ENCODE measurements at regions of chr1 and their contacts with region 1.

Region 1: GRCh38 chr1:235415008-235415904 is 48.0 kb downstream of the TBCE start:
- DNase-seq: peak; percentile 90
- H3K4me3 ChIP-seq: no peak overlapping the region
- H3K27ac ChIP-seq: no peak overlapping the region
- H3K4me1 ChIP-seq: peaks cover 6% of the 10 kb centered on the region
- H3K27me3 ChIP-seq: no peaks in the 10 kb centered on the region

Region 2: DNA sequence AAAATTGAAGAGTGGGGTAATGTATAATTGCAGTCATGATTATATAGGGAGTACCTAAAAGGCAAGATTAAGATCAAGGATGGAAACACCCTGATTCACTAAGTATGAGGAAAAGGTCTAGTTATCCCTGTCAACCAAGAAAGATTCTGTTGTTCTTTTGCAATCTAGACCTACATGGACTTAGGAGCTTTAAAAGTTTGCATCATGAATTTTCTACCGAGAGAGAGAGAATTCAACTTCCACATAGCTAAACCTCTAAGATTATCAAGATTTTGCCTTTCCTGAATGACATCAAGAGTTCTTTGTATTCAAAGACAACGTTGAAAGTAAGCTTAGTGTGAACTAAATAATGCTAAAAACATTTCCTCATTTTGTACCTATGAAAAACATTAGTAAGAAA is 175.4 kb before region 1 on chr1:
- in situ Hi-C with region 1: loop called (anchors 10 kb)
- DNase-seq: peak; percentile 20
- H3K4me3 ChIP-seq: no peak overlapping the region
- H3K27ac ChIP-seq: no peak overlapping the region; the same call in 1 of the 2 replicates
- H3K4me1 ChIP-seq: peaks cover 11% of the 10 kb centered on the region
- H3K27me3 ChIP-seq: no peaks in the 10 kb centered on the region

Region 3: DNA sequence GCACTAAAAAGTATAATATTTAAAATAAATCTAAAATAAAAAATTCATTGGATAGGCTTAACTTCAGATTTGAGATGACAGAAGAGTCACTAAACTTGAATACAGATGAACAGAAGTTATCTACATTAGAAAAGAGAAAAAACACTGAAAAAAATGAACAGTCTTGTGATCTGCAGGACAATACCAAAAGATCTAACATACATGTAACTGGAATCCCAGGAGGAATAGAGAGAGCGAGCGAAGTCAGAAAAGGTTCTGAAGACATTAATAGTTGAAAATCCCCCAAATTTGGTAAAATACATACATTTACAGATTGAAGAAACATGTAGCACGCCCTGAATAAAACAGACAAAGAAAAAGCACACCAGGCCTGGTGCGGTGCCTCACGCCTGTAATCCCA is 67.8 kb after region 1 on chr1:
- in situ Hi-C with region 1: no loop called
- DNase-seq: no peak
- H3K4me3 ChIP-seq: no peak overlapping the region
- H3K27ac ChIP-seq: no peak overlapping the region
- H3K4me1 ChIP-seq: no peaks in the 10 kb centered on the region
- H3K27me3 ChIP-seq: no peaks in the 10 kb centered on the region

Region 4: GRCh38 chr1:235999259-235999925 is 584.1 kb after region 1 on chr1:
- in situ Hi-C with region 1: no loop called
- DNase-seq: peak; percentile 93
- H3K4me3 ChIP-seq: no peak overlapping the region
- H3K27ac ChIP-seq: peak overlapping the region; percentile 76
- H3K4me1 ChIP-seq: peaks cover 19% of the 10 kb centered on the region
- H3K27me3 ChIP-seq: no peaks in the 10 kb centered on the region

Measured in GM23248 (cell line).